ENCODE measurements at regions of chr4 and their contacts with region 1.

Region 1: GRCh38 chr4:78644744-78645330 is 93.3 kb downstream of the ANXA3 start:
- DNase-seq: no peak
- H3K4me3 ChIP-seq: no peak overlapping the region
- H3K27me3 ChIP-seq: no peaks in the 10 kb centered on the region
- CTCF ChIP-seq: peak; percentile 86

Region 2: DNA sequence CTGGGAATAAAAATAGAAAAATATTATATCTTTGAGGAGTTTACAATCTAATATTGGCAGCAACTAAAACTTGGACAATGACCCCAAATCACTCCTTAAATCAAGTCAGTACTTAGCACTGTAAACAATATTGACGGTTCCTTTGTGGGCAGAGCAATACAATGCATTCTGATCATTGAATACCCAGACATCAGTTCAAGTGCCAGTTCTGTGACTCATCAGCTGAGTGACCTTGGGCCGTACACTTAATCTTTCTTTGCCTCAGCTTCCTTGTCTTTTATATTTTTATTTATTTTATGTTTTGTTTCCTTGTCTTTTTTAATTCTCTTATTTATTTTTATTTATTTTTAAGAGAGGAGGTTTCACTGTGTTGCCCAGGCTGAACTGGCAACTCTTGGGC is 205.5 kb before region 1 on chr4:
- CTCF ChIA-PET with region 1: no interaction called
- POLR2A ChIA-PET with region 1: no interaction called
- DNase-seq: no peak
- H3K4me3 ChIP-seq: no peak overlapping the region
- H3K27me3 ChIP-seq: no peaks in the 10 kb centered on the region
- CTCF ChIP-seq: no peak

Region 3: DNA sequence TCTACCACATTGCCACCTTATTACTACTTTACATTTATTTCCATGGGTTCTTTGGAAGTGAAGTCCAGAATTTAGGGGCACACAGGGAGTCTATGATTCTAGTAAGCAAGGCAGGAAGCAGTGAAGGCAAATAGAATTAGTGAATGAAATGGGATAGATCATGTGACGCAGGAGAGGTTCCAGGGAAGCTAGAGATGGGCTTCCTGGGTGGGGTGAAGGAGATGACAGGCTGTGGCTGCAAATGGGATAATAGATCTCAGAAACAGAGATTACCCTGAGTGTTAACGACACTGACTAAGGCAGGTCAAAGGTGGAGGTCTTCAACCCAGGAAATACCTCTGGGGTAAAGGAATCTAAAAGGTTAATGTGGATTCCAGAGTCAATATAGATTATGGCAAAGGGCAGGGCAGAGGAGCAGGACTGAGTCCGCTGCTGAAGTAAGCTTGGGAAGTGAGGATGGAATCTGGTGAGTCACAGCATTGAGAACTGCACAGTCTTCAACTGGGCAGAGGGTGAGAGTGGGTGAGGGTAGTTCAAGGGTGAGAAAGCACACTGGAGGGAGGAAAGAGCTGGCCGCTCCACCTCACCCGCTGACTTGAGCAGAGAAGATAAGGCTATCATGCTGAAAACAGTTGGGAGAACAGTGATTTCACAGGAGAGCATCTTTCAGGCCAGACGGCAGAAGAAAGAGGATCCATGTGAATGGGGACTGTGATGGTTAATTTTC is 22.4 kb before region 1 on chr4:
- CTCF ChIA-PET with region 1: interaction called, 15 read pairs
- POLR2A ChIA-PET with region 1: no interaction called
- DNase-seq: no peak
- H3K4me3 ChIP-seq: no peak overlapping the region
- H3K27me3 ChIP-seq: no peaks in the 10 kb centered on the region
- CTCF ChIP-seq: no peak